ENCODE measurements at regions of chr16 and their contacts with region 1.

Region 1: GRCh38 chr16:5206331-5206990 is 108.9 kb upstream of the EEF2KMT start:
- DNase-seq: no peak

Region 2: GRCh38 chr16:4350787-4351659 is 855.4 kb before region 1 on chr16 and contains the start of gene PAM16:
- intact Hi-C with region 1: no loop called
- DNase-seq: peak; percentile 99
- total RNA-seq, gene PAM16: 25.3 to 28.8 TPM

Region 3: GRCh38 chr16:4859900-4860255 is 346.6 kb before region 1 on chr16:
- intact Hi-C with region 1: no loop called
- DNase-seq: no peak

Region 4: DNA sequence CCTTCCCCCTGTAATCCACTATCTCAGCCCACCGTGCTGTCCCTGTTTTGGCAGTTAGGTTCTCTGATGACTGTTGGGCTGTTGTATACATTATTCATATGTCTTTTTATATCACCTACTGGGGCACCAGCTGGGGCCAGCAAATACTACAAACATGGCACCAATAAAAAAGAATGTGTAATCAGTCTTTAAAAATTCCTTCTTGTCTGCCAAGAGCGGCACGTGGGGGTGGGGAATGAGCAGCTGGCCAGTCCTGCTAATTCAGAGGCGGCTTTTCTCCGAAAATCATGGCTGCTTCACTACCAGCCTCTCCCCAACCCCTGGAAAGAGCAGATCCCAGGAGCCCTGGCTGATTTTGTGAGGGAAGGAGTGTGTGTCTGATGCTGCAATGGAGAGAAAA is 31.2 kb before region 1 on chr16:
- intact Hi-C with region 1: loop called in 1 of 2 experiments (anchors 2 kb)
- DNase-seq: no peak

Region 5: DNA sequence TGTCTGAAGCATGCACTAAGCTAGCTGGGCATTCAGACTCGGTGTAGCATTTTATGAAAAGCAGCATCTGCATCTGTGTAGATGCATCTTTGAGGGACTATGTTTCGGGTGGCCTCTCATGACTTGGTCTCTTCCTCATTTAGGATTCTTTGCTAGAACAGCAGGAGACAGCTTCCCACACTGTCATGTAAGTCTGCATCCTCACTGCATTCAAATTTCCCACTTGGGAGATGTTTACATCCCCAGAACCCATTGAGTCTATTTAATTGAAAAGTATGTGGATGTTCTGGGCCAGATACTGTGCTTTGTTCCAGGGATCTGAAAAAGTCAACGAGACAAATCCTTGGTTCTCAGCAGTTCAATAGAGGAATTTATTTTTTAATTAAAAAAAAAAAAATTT is 89.7 kb after region 1 on chr16:
- intact Hi-C with region 1: no loop called
- DNase-seq: no peak

Region 6: GRCh38 chr16:5309946-5310611 is 103.6 kb after region 1 on chr16:
- intact Hi-C with region 1: no loop called
- DNase-seq: no peak